ENCODE measurements at regions of chr7 and their contacts with region 1.

Region 1: GRCh38 chr7:35753761-35754603 is 46.9 kb upstream of the SEPTIN7 start:
- DNase-seq: peak; percentile 26 to 55
- ATAC-seq: peak; percentile 78 to 92 (median 90)
- H3K4me3 ChIP-seq: peak overlapping the region; percentile 6
- H3K27ac ChIP-seq: peak overlapping the region; percentile 80
- H3K4me1 ChIP-seq: peaks cover 44% of the 10 kb centered on the region
- H3K27me3 ChIP-seq: no peaks in the 10 kb centered on the region
- CTCF ChIP-seq: no peak

Region 2: DNA sequence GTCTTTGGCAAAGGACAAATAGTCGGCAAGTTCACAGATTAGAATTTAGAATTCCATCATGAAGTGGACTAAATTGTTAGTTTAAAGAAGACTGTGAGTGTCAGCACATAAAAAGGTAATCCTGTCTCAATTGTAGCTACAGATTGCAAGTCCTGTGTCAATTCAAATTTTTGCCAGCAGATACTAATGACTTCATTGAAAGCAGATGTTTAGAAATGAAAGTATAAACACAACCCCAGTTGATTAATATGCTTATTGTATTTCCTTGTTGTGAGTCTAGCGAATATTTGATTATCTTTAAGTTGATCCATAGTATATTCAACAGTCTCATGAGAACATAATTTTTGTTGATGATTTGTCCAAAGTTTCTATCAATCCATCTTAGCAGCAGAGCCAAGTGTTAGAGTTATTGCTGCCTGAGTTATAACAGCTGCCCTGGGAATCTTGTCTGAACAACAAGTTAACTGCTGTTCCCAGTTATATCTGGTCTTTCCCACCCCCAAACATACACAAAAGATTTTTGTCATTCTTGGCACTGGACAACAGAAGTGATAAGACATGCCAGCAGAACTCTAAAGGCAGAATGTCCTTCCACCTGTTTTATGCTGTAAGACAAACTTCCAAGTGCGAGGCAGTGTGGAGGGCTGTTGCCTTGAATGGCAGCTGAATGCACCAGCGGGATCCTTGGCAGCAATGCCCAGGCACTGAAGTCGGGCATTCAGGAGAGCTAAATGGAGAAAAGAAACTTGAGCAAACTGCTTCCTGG is 37.8 kb before region 1 on chr7:
- intact Hi-C with region 1: loop called in 1 of 2 experiments (anchors 5 kb)
- DNase-seq: peak in 1 of 2 donors; percentile 65
- ATAC-seq: peak; percentile 70 to 89 (median 84)
- H3K4me3 ChIP-seq: peak overlapping the region; percentile 52
- H3K27ac ChIP-seq: peak overlapping the region; percentile 82
- H3K4me1 ChIP-seq: peaks cover 53% of the 10 kb centered on the region
- H3K27me3 ChIP-seq: no peaks in the 10 kb centered on the region
- CTCF ChIP-seq: no peak

Region 3: GRCh38 chr7:35828817-35829216 is 74.8 kb after region 1 on chr7:
- intact Hi-C with region 1: no loop called
- DNase-seq: no peak
- ATAC-seq: peak; percentile 57 to 73 (median 62)
- H3K4me3 ChIP-seq: no peak overlapping the region
- H3K27ac ChIP-seq: peak overlapping the region; percentile 33
- H3K4me1 ChIP-seq: peaks cover 69% of the 10 kb centered on the region
- H3K27me3 ChIP-seq: no peaks in the 10 kb centered on the region
- CTCF ChIP-seq: no peak

Measured in psoas muscle (tissue), 8 donors.